ENCODE measurements at regions of chr10 and their contacts with region 1.

Region 1: GRCh38 chr10:13414894-13415293 is 66.8 kb upstream of the SEPHS1 start:
- DNase-seq: peak; percentile 43
- ATAC-seq: peak; percentile 94
- H3K4me3 ChIP-seq: no peak overlapping the region
- H3K27ac ChIP-seq: no peak overlapping the region
- H3K4me1 ChIP-seq: no peaks in the 10 kb centered on the region
- H3K27me3 ChIP-seq: no peaks in the 10 kb centered on the region
- CTCF ChIP-seq: peak; percentile 44 to 63 (median 63); a peak in 5 of 6 replicates
- POLR2A ChIP-seq: no peak
- RAD21 ChIP-seq: peak; percentile 49

Region 2: DNA sequence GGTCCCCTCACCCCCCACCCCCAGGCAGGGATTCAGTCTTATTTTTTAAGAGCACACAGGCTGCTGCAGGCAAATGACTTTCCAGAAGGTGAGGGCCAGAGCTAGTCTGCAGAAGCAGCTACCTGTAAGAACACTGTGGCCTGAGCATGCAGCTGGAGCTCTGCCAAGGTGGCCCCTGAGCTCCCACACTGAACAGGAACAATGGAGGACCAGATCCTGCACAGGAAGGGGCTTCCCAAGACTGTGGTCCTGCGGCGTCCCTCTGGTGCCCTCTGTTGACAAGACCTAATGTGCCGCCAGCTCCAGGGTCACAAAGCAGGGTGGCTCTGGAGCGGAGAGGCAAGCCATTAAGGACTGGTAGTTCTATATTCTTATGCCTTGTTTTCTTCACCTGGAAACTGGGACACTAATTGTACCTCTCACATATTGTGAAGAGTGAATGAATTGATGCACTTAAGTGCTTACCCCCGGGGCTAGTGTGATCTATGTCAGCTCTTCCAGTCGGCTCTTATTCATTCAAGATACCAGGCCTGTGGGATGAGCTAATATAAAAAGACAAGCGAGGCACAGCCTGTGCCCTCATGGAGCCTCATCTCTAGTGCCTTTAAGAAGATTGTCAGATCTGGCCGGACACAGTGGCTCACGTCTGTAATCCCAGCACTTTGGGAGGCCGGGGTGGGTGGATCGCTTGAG is 121.9 kb after region 1 on chr10:
- CTCF ChIA-PET with region 1: interaction called, 15 read pairs
- POLR2A ChIA-PET with region 1: no interaction called
- RAD21 ChIA-PET with region 1: no interaction called
- intact Hi-C with region 1: loop called (anchors 2 kb)
- DNase-seq: peak; percentile 33
- ATAC-seq: peak; percentile 100
- H3K4me3 ChIP-seq: no peak overlapping the region
- H3K27ac ChIP-seq: no peak overlapping the region
- H3K4me1 ChIP-seq: peaks cover 0 to 3% of the 10 kb centered on the region in 2 experiments; a peak in 1 of 4 replicates
- H3K27me3 ChIP-seq: no peaks in the 10 kb centered on the region
- CTCF ChIP-seq: peak; percentile 62 to 84 (median 80); a peak in 5 of 6 replicates
- POLR2A ChIP-seq: no peak
- RAD21 ChIP-seq: peak; percentile 78

Measured in HCT116 (cell line).